ENCODE measurements at regions of chr16 and their contacts with region 1.

Region 1: GRCh38 chr16:88569985-88570690 is at the start of gene ZC3H18:
- DNase-seq: peak; percentile 97 to 98
- ATAC-seq: peak; percentile 97 to 99 (median 98)
- H3K4me3 ChIP-seq: peak within 1 kb of the TSS; percentile 67 to 96 (median 91)
- H3K27ac ChIP-seq: peak within 1 kb of the TSS; percentile 33 to 92 (median 84)
- H3K4me1 ChIP-seq: peaks cover 6 to 30% (median 25%) of the 10 kb centered on the region in 9 donors
- H3K27me3 ChIP-seq: no peaks in the 10 kb centered on the region
- CTCF ChIP-seq: no peak
- total RNA-seq, gene ZC3H18: 18.3 to 28.7 (median 22.0) TPM

Region 2: GRCh38 chr16:88442727-88443576 is 127.2 kb before region 1 on chr16:
- intact Hi-C with region 1: loop called in 1 of 10 experiments (anchors 10 kb)
- DNase-seq: peak; percentile 74 to 80
- ATAC-seq: peak; percentile 82 to 92 (median 88)
- H3K4me3 ChIP-seq: no peak overlapping the region
- H3K27ac ChIP-seq: no peak overlapping the region
- H3K4me1 ChIP-seq: peaks cover 0 to 10% (median 6%) of the 10 kb centered on the region in 9 donors
- H3K27me3 ChIP-seq: peaks cover 0 to 14% (median 7%) of the 10 kb centered on the region in 7 donors
- CTCF ChIP-seq: peak; percentile 95 to 99 (median 97)

Region 3: GRCh38 chr16:88533932-88534732 is 36.0 kb before region 1 on chr16:
- intact Hi-C with region 1: loop called in 1 of 10 experiments (anchors 5 kb)
- DNase-seq: peak; percentile 68 to 84
- ATAC-seq: peak in 6 of 8 donors; percentile 41 to 80 (median 50)
- H3K4me3 ChIP-seq: peak overlapping the region in 9 of 10 donors; percentile 54 to 74 (median 66)
- H3K27ac ChIP-seq: peak overlapping the region; percentile 74 to 94 (median 88)
- H3K4me1 ChIP-seq: peaks cover 5 to 24% (median 10%) of the 10 kb centered on the region in 9 donors
- H3K27me3 ChIP-seq: peaks cover 0 to 12% (median 10%) of the 10 kb centered on the region in 7 donors
- CTCF ChIP-seq: no peak

Region 4: GRCh38 chr16:88591577-88592021 is 21.5 kb after region 1 on chr16:
- intact Hi-C with region 1: loop called in 1 of 10 experiments (anchors 2 kb)
- DNase-seq: peak in 1 of 2 donors; percentile 34
- ATAC-seq: peak in 4 of 8 donors; percentile 18 to 80 (median 34)
- H3K4me3 ChIP-seq: no peak overlapping the region
- H3K27ac ChIP-seq: peak overlapping the region in 1 of 10 donors; percentile 71
- H3K4me1 ChIP-seq: peaks cover 0 to 41% (median 23%) of the 10 kb centered on the region in 9 donors
- H3K27me3 ChIP-seq: no peaks in the 10 kb centered on the region
- CTCF ChIP-seq: no peak

Region 5: GRCh38 chr16:88706288-88706964 is 136.3 kb after region 1 on chr16 and contains the starts of genes CTU2 and RNF166:
- intact Hi-C with region 1: loop called in 4 of 10 experiments (anchors 5 to 10 kb)
- DNase-seq: peak; percentile 91 to 94
- ATAC-seq: peak; percentile 79 to 90 (median 86)
- H3K4me3 ChIP-seq: peak within 1 kb of the TSS; percentile 76 to 100 (median 99)
- H3K27ac ChIP-seq: peak within 1 kb of the TSS; percentile 62 to 97 (median 84)
- H3K4me1 ChIP-seq: peaks cover 14 to 61% (median 50%) of the 10 kb centered on the region in 9 donors
- H3K27me3 ChIP-seq: no peaks in the 10 kb centered on the region
- CTCF ChIP-seq: no peak
- total RNA-seq, gene CTU2: 11.8 to 17.3 (median 13.2) TPM
- total RNA-seq, gene RNF166: 11.8 to 19.1 (median 14.3) TPM

Region 6: DNA sequence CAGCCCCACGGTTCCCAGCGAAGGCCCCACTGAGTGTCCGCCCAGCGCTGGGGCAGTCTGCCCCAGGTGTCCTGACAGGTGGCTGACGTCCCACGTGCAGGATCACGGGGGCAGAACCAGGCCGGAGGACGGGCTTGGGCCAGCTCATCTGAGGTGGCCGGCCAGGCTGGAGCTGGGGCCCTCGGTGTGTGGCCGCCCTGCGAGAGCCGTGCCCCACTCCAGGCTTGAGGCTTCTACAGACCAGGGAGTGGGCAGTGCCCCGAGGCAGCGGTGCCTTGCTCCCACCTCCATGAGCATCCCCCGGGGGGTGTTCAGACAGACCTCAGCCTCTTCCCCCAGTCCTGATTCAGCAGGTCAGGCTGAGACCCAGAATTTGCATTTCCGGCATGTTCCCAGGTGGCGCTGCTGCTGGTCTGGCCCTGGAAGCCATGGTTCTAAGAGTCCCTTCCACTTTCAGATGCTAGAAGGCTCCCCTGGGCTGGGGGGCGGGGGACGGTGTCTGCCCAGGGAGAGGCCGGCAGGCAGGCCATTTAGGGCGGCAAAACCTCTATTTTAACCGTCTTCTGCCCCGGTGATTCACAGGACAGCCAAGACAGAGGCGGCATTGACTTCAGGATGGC is 331.7 kb after region 1 on chr16:
- intact Hi-C with region 1: no loop called
- DNase-seq: no peak
- ATAC-seq: no peak
- H3K4me3 ChIP-seq: no peak overlapping the region
- H3K27ac ChIP-seq: no peak overlapping the region
- H3K4me1 ChIP-seq: peaks cover 0 to 27% (median 5%) of the 10 kb centered on the region in 9 donors
- H3K27me3 ChIP-seq: no peaks in the 10 kb centered on the region
- CTCF ChIP-seq: no peak